IMR-90 (cell line): ENCODE measurements at regions of chr9 and their contacts with region 1.

Region 1: GRCh38 chr9:21720758-21721157 is 81.7 kb upstream of the MTAP start:
- DNase-seq: no peak
- ATAC-seq: no peak
- H3K4me3 ChIP-seq: no peak overlapping the region
- H3K27ac ChIP-seq: no peak overlapping the region
- H3K4me1 ChIP-seq: no peaks in the 10 kb centered on the region
- H3K27me3 ChIP-seq: no peaks in the 10 kb centered on the region
- CTCF ChIP-seq: no peak
- POLR2A ChIP-seq: no peak
- RAD21 ChIP-seq: no peak

Region 2: DNA sequence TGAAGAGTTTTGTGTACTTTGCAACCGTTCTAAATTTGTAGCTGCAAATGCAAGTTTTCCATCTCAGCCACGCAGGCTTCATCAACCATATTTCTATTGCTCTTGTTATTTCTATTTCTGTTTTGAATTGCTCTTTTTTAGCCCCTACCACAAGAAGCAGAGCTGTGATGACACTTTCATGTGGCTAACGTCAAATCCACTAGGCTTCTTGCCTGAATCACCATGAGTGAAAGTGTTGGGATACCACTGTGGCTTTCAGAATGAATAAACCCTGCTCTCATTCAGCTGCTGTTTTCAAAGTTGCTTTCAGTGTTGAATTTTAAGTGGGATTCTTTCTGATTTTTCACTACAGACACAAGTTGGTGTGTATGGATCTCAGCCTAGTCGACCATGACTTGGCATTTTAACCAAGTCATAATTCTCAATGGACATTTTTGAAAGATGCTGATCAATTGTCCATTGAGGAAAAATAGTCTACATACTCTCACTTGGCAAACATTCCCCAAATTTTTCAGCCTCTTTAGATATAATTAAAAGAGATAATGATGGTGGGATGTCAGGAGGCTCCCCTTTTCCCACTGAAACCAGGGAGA is 40.6 kb after region 1 on chr9:
- CTCF ChIA-PET with region 1: no interaction called
- POLR2A ChIA-PET with region 1: no interaction called
- dilution Hi-C with region 1: no loop called
- in situ Hi-C with region 1: no loop called
- intact Hi-C with region 1: loop called (anchors 5 kb)
- DNase-seq: no peak
- ATAC-seq: no peak
- H3K4me3 ChIP-seq: no peak overlapping the region
- H3K27ac ChIP-seq: no peak overlapping the region
- H3K4me1 ChIP-seq: no peaks in the 10 kb centered on the region
- H3K27me3 ChIP-seq: no peaks in the 10 kb centered on the region
- CTCF ChIP-seq: no peak
- POLR2A ChIP-seq: no peak
- RAD21 ChIP-seq: no peak